Heart left ventricle (tissue), 16 donors: ENCODE measurements at regions of chr5 and their contacts with region 1.

Region 1: GRCh38 chr5:169289520-169289919 is 11.4 kb downstream of the SLIT3 start:
- DNase-seq: no peak
- ATAC-seq: no peak
- H3K4me3 ChIP-seq: no peak overlapping the region
- H3K27ac ChIP-seq: no peak overlapping the region
- H3K4me1 ChIP-seq: peaks cover 0 to 27% (median 5%) of the 10 kb centered on the region in 12 donors
- H3K27me3 ChIP-seq: no peaks in the 10 kb centered on the region
- CTCF ChIP-seq: no peak
- POLR2A ChIP-seq: no peak

Region 2: DNA sequence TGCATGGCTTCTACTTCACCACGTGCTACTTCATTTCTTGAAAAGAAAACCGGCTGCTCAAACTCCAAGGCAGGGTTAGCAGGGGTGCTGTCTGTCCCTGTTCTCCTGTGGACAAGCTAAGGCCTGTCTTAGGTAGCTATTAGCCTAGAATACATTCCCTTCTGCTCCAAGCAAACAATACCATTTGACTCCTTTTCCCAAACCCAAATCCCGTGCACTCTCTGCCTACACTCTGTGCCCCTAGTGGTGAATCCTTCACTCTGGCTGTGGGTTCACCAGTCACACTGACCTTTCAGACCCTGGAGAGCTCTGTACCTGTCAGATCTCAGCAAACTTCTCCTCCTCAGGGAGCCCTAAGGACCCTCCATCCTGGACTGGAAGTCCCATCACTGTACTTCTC is 200.2 kb before region 1 on chr5:
- intact Hi-C with region 1: no loop called
- DNase-seq: no peak
- ATAC-seq: no peak
- H3K4me3 ChIP-seq: no peak overlapping the region
- H3K27ac ChIP-seq: no peak overlapping the region
- H3K4me1 ChIP-seq: no peaks in the 10 kb centered on the region
- H3K27me3 ChIP-seq: no peaks in the 10 kb centered on the region
- CTCF ChIP-seq: no peak
- POLR2A ChIP-seq: no peak

Region 3: DNA sequence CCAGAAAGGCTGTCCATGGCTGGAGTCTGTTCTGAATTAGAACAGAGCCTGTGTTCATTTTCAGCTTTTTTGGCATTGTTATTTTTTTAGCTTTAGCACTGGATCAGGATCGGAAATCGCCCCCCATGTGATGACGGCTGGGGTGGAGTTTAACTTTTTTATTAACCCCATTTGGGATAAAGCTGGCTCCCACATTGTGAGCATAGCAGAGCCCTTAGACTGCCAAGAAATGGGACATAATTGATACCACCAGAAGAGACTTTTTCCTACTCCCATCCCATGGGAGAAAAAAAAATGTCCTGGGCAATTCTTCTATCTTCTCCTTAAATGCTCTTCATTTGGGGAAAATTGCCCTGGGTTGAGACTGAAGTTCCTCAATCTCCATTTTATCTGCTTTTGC is 41.0 kb before region 1 on chr5:
- intact Hi-C with region 1: loop called in 1 of 10 experiments (anchors 5 kb)
- DNase-seq: no peak
- ATAC-seq: no peak
- H3K4me3 ChIP-seq: no peak overlapping the region
- H3K27ac ChIP-seq: no peak overlapping the region
- H3K4me1 ChIP-seq: peaks cover 0 to 19% (median 5%) of the 10 kb centered on the region in 12 donors
- H3K27me3 ChIP-seq: no peaks in the 10 kb centered on the region
- CTCF ChIP-seq: no peak
- POLR2A ChIP-seq: no peak

Region 4: GRCh38 chr5:169331292-169331852 is 41.9 kb after region 1 on chr5:
- intact Hi-C with region 1: no loop called
- DNase-seq: no peak
- ATAC-seq: no peak
- H3K4me3 ChIP-seq: no peak overlapping the region
- H3K27ac ChIP-seq: no peak overlapping the region
- H3K4me1 ChIP-seq: no peaks in the 10 kb centered on the region
- H3K27me3 ChIP-seq: peaks cover 0 to 12% (median 0%) of the 10 kb centered on the region in 9 donors
- CTCF ChIP-seq: peak in 1 of 12 donors; percentile 9
- POLR2A ChIP-seq: no peak

Region 5: GRCh38 chr5:170357955-170358444 is 1068.5 kb after region 1 on chr5:
- intact Hi-C with region 1: no loop called
- DNase-seq: peak; percentile 59 to 83 (median 64)
- ATAC-seq: peak; percentile 30 to 65 (median 44)
- H3K4me3 ChIP-seq: no peak overlapping the region
- H3K27ac ChIP-seq: peak overlapping the region in 9 of 12 donors; percentile 6 to 83 (median 45)
- H3K4me1 ChIP-seq: peaks cover 0 to 83% (median 52%) of the 10 kb centered on the region in 12 donors
- H3K27me3 ChIP-seq: peaks cover 0 to 6% (median 0%) of the 10 kb centered on the region in 9 donors
- CTCF ChIP-seq: no peak
- POLR2A ChIP-seq: no peak